Astrocyte of the cerebellum (primary cell): ENCODE measurements at regions of chr18 and their contacts with region 1.

Region 1: GRCh38 chr18:8277270-8277669 is 332.0 kb upstream of the RAB12 start:
- DNase-seq: no peak
- H3K4me3 ChIP-seq: no peak overlapping the region
- CTCF ChIP-seq: no peak

Region 2: GRCh38 chr18:8373486-8373885 is 96.2 kb after region 1 on chr18:
- in situ Hi-C with region 1: loop called (anchors 5 kb)
- DNase-seq: no peak
- H3K4me3 ChIP-seq: no peak overlapping the region
- CTCF ChIP-seq: no peak